MCF 10A (cell line): ENCODE measurements at regions of chr19 and their contacts with region 1.

Region 1: GRCh38 chr19:48835734-48836088 is 580 bp downstream of the HSD17B14 start:
- DNase-seq: peak; percentile 91
- H3K4me3 Mint-ChIP-seq: no peak overlapping the region
- H3K27ac Mint-ChIP-seq: no peak overlapping the region
- H3K4me1 Mint-ChIP-seq: peaks cover 5% of the 10 kb centered on the region
- H3K27me3 Mint-ChIP-seq: no peaks in the 10 kb centered on the region
- CTCF ChIP-seq: peak; percentile 76

Region 2: DNA sequence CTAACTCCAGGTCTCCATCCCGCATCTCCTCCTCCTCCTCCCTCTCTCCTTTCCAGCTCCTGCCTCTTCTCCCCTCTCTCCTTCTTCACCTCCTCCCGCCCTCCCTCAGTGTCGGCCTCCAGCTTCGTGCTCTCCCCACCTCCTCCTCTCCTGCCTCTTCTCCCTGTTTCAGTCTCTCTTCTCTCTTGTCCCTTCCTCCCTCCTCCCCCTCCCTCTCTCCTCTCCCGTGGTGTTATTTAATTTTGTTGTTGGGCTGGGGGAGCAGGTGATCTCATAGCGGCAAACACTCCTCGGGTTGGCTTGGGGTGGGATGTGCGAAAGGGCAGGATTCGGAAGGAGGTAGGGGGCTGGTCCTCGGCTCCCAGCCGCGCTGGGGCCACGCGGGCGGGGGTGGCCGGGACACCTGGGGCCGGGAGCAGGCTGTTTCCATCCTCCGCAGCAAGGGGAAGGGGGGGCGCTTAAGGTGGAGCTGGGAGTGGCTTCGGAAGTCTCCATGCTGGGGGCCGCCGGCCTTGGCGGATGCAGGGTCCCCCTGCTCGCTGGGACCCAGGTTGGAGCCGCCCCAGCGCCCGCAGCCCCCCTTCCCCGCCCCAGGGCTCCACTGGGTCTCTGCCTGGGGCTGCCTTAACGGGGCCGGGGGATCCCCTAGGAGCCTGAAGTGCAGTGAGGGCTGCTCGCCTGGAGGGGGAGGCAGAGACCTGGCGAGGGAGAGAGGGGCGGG is 189.6 kb before region 1 on chr19 and contains the start of gene CA11:
- CTCF ChIA-PET with region 1: interaction called, 5 read pairs
- POLR2A ChIA-PET with region 1: interaction called, 5 read pairs
- intact Hi-C with region 1: loop called (anchors 2 kb)
- DNase-seq: peak; percentile 90
- H3K4me3 Mint-ChIP-seq: peak within 1 kb of the TSS; percentile 73
- H3K27ac Mint-ChIP-seq: peak within 1 kb of the TSS; percentile 4
- H3K4me1 Mint-ChIP-seq: peaks cover 24% of the 10 kb centered on the region
- H3K27me3 Mint-ChIP-seq: peaks cover 10% of the 10 kb centered on the region
- CTCF ChIP-seq: peak; percentile 89
- total RNA-seq, gene CA11: 2.6 and 2.9 TPM in 2 replicates